CD8-positive, alpha-beta T cell (primary cell): ENCODE measurements at regions of chr10 and their contacts with region 1.

Region 1: DNA sequence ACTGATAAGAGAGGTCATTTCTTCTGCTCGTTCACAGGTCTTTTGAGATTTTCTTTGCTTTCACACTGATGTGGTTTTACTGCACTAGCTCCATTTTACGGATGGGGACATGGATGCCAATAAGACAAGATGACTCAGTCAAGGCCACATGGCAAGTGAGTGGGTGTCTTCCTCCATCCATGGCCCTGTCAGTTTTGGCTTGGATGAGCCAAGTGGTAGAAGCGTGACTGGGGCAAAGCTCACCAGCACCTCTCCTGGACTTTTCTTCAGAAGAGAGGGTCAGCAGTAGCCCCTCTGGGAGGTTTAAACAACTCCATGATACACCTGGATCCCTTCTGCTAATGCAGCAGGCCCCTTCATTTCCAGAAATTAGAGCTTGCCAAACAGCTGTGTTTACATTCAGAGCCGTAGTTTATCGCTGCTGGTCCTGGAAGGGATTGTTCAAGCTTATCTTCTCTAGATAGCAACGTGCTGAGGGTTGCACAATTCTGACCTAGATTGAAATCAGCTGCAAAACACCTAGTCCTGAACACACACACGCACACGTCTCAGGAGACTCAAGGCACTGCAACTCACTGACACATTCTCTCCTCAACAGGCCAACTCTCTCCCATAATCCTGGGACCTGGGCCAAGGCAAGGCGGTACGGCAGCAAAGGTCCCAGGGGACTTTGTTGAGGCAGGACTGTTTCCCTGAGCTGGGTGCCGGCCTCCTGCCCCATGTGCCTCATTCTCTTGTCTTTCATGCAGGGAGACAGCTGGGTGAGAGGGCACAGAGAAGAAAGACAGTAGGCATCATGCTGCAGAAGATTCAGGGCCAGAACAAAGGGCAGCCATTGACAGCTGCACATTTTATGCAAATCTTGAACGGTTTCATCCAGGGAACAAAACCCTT is 14.2 kb upstream of the PDCD4 start:
- DNase-seq: peak in 3 of 9 experiments; percentile 16 to 62 (median 47)
- ATAC-seq: peak; percentile 9
- H3K4me3 ChIP-seq: no peak overlapping the region
- H3K4me3 Mint-ChIP-seq: no peak overlapping the region
- H3K27ac ChIP-seq: peak overlapping the region in 1 of 2 experiments; percentile 97
- H3K27ac Mint-ChIP-seq: peak overlapping the region; percentile 98
- H3K4me1 ChIP-seq: peaks cover 75% of the 10 kb centered on the region
- H3K4me1 Mint-ChIP-seq: peaks cover 86% of the 10 kb centered on the region
- H3K27me3 ChIP-seq: no peaks in the 10 kb centered on the region
- H3K27me3 Mint-ChIP-seq: no peaks in the 10 kb centered on the region
- CTCF ChIP-seq: no peak

Region 2: GRCh38 chr10:110783509-110784107 is 73.9 kb before region 1 on chr10:
- CTCF ChIA-PET with region 1: no interaction called
- POLR2A ChIA-PET with region 1: no interaction called
- intact Hi-C with region 1: loop called in 1 of 2 experiments (anchors 2 kb)
- DNase-seq: peak; percentile 42 to 91 (median 73)
- ATAC-seq: peak; percentile 87
- H3K4me3 ChIP-seq: no peak overlapping the region
- H3K4me3 Mint-ChIP-seq: peak overlapping the region; percentile 40
- H3K27ac ChIP-seq: peak overlapping the region; percentile 40 to 67
- H3K27ac Mint-ChIP-seq: peak overlapping the region; percentile 94
- H3K4me1 ChIP-seq: peaks cover 21% of the 10 kb centered on the region
- H3K4me1 Mint-ChIP-seq: peaks cover 46% of the 10 kb centered on the region
- H3K27me3 ChIP-seq: no peaks in the 10 kb centered on the region
- H3K27me3 Mint-ChIP-seq: no peaks in the 10 kb centered on the region
- CTCF ChIP-seq: no peak

Region 3: DNA sequence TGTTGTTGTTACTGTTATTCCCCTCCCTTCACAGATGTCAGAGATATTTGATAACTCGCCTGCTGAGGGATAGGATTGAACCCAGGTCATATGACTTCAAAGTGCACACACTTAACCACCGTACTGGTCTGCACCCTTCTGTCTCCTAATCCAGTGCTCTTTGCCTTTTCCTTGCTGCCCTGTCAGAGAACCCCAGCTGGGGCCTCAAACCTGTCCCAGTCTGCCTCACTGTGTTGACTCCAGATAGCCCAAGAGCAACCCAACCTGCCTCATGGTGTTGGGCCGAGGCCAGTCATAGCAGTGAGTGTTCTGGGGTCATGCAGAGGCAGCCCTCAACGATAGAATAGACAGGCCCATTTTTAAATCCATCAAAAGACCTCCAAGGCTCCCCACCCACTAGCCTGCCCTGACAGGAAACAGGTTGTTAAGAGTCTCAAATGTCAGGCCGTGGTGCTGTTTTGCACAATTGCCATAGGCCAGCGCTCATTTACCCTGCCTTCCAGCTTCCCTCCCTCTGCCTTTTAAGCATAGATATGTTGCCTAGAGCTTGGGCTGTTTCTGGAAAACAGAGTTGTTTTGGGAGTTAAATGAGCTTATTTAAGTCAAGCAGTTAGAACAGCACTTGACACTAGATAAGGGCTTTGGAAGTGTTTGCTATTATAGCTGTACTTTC is 22.7 kb before region 1 on chr10:
- CTCF ChIA-PET with region 1: interaction called, 11 read pairs
- POLR2A ChIA-PET with region 1: interaction called, 15 read pairs
- intact Hi-C with region 1: no loop called
- DNase-seq: peak in 7 of 9 experiments; percentile 22 to 77 (median 55)
- ATAC-seq: peak; percentile 89
- H3K4me3 ChIP-seq: no peak overlapping the region
- H3K4me3 Mint-ChIP-seq: peak overlapping the region; percentile 53
- H3K27ac ChIP-seq: peak overlapping the region; percentile 38 to 41
- H3K27ac Mint-ChIP-seq: peak overlapping the region; percentile 97
- H3K4me1 ChIP-seq: peaks cover 37% of the 10 kb centered on the region
- H3K4me1 Mint-ChIP-seq: peaks cover 43% of the 10 kb centered on the region
- H3K27me3 ChIP-seq: no peaks in the 10 kb centered on the region
- H3K27me3 Mint-ChIP-seq: no peaks in the 10 kb centered on the region
- CTCF ChIP-seq: no peak

Region 4: DNA sequence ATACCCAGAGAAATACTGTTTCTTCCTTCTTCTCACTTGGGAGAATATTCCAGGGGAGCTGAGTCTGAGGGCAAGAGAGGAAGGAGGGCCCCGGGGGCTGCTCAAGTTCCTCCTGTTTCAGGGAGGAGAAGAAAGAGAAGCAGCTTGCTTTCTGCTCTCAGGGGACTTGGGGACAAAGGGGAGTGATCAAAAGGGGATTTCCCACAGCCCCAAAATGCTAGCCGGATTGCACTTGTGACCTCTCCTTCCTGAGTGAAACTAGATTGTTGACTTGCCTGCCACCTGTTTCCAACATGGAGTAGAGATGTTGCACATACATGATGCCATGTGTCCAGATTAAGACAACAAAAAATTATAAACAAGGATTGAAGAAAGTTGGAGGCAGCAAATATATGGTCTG is 14.5 kb before region 1 on chr10:
- CTCF ChIA-PET with region 1: interaction called, 4 read pairs
- POLR2A ChIA-PET with region 1: interaction called, 6 read pairs
- intact Hi-C with region 1: loop called in 1 of 2 experiments (anchors 2 kb)
- DNase-seq: peak in 5 of 9 experiments; percentile 37 to 88 (median 63)
- ATAC-seq: peak; percentile 93
- H3K4me3 ChIP-seq: no peak overlapping the region
- H3K4me3 Mint-ChIP-seq: peak overlapping the region; percentile 9
- H3K27ac ChIP-seq: no peak overlapping the region
- H3K27ac Mint-ChIP-seq: peak overlapping the region; percentile 58
- H3K4me1 ChIP-seq: peaks cover 26% of the 10 kb centered on the region
- H3K4me1 Mint-ChIP-seq: peaks cover 62% of the 10 kb centered on the region
- H3K27me3 ChIP-seq: no peaks in the 10 kb centered on the region
- H3K27me3 Mint-ChIP-seq: no peaks in the 10 kb centered on the region
- CTCF ChIP-seq: no peak

Region 5: DNA sequence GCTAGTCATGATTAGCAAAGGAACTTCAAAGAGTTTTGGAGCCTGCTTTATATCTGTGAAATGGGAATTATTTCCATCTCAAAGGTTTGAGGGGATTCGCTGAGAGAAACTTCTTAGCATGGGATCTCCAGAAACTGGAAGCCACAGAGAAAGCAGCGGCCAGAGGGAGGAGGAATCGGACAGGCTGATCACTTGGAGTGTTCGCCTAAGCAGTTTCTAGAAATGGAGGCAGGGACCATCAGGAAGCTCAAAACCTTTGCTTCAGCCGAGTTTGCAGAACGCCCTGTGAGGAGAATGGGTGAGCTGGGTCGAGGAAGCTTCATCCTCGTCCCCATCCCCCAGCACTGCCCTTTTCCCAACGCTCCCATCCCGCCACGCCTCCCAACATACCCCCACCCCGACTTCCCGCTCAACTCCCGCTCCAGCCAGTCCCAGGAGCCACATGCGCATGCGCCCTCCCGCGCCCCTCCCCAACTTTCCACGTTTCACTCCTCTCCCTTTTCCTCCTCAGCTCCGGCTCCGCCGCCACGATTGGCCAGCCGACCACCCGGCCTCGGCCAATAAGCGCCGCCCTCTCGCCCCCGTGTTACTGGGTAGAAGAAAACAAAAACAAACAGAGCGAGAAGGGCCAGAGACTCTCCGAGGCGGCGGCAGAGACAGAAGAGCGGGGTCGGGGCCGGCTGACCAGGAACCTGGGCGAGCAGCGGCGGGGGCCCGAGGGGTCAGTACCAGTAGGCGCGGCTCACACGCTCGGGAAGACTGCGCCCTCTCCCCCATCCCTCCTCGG is 14.0 kb after region 1 on chr10 and contains the start of gene PDCD4:
- CTCF ChIA-PET with region 1: interaction called, 15 read pairs
- POLR2A ChIA-PET with region 1: interaction called, 17 read pairs
- intact Hi-C with region 1: loop called in 1 of 2 experiments (anchors 1 kb)
- DNase-seq: peak; percentile 87 to 96 (median 94)
- ATAC-seq: peak; percentile 58
- H3K4me3 ChIP-seq: peak within 1 kb of the TSS; percentile 55 to 85
- H3K4me3 Mint-ChIP-seq: peak within 1 kb of the TSS; percentile 89
- H3K27ac ChIP-seq: peak within 1 kb of the TSS; percentile 78 to 97
- H3K27ac Mint-ChIP-seq: peak within 1 kb of the TSS; percentile 98
- H3K4me1 ChIP-seq: peaks cover 71% of the 10 kb centered on the region
- H3K4me1 Mint-ChIP-seq: peaks cover 67% of the 10 kb centered on the region
- H3K27me3 ChIP-seq: no peaks in the 10 kb centered on the region
- H3K27me3 Mint-ChIP-seq: no peaks in the 10 kb centered on the region
- CTCF ChIP-seq: no peak
- total RNA-seq, gene PDCD4: 672 to 688 TPM

Region 6: DNA sequence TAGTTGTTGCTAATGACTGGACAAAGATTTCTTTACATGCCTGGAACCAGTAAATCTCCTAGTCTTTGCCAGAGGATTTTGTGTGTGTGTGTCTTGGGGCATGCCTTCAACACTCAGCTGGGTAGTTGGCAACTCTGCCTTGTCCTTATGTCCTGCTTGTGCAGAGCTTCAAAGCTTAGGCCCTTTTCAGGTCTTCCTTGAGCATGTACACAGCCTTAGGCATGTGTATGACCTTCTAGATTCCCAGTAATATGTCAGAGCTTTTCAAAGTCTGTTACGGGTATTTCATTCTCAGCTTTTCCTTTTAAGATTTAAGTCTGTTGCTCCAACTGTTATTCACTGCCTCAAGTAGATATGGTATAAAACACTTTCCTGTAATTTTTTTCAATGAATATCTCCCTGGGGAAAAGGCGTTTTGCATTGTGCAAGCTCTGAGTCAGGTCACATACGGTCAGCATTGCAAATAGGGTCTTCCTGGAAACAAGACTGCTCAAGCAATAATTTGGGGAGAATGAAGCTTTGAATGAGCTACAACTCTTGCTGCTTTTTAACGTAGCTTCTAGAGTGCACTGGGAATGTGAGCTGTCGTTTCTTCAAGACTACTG is 87.4 kb after region 1 on chr10:
- CTCF ChIA-PET with region 1: no interaction called
- POLR2A ChIA-PET with region 1: no interaction called
- intact Hi-C with region 1: no loop called
- DNase-seq: no peak
- ATAC-seq: no peak
- H3K4me3 ChIP-seq: no peak overlapping the region
- H3K4me3 Mint-ChIP-seq: no peak overlapping the region
- H3K27ac ChIP-seq: no peak overlapping the region
- H3K27ac Mint-ChIP-seq: no peak overlapping the region
- H3K4me1 ChIP-seq: no peaks in the 10 kb centered on the region
- H3K4me1 Mint-ChIP-seq: peaks cover 59% of the 10 kb centered on the region
- H3K27me3 ChIP-seq: no peaks in the 10 kb centered on the region
- H3K27me3 Mint-ChIP-seq: no peaks in the 10 kb centered on the region
- CTCF ChIP-seq: no peak